ENCODE measurements at regions of chrX and their contacts with region 1.

Region 1: DNA sequence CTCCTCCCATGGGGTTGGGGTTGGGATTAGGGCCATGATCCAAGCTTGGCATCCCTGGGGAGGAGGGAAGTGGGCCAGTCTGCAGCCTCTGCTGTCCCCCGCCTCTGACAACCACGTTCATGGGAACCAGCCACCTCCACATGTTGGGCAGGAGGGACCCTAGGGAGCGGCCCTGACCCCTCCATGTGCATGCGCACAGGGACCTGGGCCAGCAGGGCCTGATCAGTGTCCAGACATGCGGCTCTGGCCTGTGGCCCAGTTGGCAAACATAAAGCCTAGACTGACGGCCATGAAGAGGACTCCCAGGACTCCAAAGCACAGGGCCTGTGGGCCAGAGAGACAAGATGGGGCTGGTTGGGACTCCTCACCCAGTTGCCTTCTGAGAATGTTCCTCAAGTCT is 11.3 kb downstream of the SLC38A5 start:
- DNase-seq: no peak
- H3K4me3 ChIP-seq: no peak overlapping the region
- H3K27ac ChIP-seq: no peak overlapping the region
- H3K4me1 ChIP-seq: no peaks in the 10 kb centered on the region
- H3K27me3 ChIP-seq: no peaks in the 10 kb centered on the region
- CTCF ChIP-seq: no peak
- EP300 ChIP-seq: no peak
- POLR2A ChIP-seq: no peak

Region 2: GRCh38 chrX:47877327-47877726 is 581.4 kb before region 1 on chrX:
- intact Hi-C with region 1: no loop called
- DNase-seq: no peak
- H3K4me3 ChIP-seq: no peak overlapping the region
- H3K27ac ChIP-seq: no peak overlapping the region
- H3K4me1 ChIP-seq: no peaks in the 10 kb centered on the region
- H3K27me3 ChIP-seq: no peaks in the 10 kb centered on the region
- CTCF ChIP-seq: no peak
- EP300 ChIP-seq: no peak
- POLR2A ChIP-seq: no peak

Region 3: DNA sequence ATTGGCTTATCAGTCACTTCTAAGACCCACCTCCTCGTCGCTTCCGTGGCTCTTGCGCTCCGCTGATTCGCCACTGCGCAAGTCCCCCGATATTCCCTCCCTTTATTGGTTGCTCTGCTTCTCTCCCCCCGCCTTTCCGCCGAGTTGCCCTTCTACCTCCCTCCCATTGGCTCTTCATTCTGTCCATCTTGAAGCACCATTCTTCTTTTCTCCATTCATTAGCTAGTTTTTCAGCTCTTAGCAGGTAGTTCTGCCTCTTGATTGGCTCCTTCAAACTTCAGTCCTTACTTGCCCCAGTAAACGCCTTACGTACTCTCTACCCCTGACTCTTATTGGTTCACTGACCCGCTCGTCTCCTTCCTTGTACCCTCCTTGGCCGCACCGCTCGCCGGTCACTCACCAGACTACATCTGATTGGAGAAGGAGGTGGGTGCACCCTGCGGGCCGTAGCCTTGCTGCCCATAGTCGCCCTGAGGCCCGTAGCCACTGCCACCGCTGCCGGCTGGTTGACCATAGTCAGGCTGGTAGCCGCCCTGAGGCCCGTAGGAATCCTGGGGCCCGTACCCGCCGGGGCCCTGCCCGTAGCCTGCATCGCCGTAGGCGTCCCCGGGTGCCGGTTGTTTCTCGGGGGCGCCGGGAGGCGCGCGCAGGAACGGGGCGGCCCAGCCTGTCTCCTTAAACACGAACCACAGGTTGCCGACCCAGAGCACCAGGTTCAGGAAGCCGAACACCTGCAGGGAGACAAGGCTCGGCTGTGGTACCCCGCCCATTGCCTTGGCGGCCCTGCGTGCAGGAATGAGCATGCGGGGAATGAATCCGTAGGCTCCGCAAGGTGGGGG is 732.5 kb after region 1 on chrX:
- intact Hi-C with region 1: loop called in 1 of 4 experiments (anchors 5 kb)
- DNase-seq: peak; percentile 84 to 91 (median 87)
- H3K4me3 ChIP-seq: peak overlapping the region; percentile 62
- H3K27ac ChIP-seq: peak overlapping the region; percentile 68 to 79
- H3K4me1 ChIP-seq: no peaks in the 10 kb centered on the region
- H3K27me3 ChIP-seq: no peaks in the 10 kb centered on the region
- CTCF ChIP-seq: no peak
- EP300 ChIP-seq: no peak
- POLR2A ChIP-seq: peak; percentile 57